IMR-90 (cell line): ENCODE measurements at regions of chr12 and their contacts with region 1.

Region 1: DNA sequence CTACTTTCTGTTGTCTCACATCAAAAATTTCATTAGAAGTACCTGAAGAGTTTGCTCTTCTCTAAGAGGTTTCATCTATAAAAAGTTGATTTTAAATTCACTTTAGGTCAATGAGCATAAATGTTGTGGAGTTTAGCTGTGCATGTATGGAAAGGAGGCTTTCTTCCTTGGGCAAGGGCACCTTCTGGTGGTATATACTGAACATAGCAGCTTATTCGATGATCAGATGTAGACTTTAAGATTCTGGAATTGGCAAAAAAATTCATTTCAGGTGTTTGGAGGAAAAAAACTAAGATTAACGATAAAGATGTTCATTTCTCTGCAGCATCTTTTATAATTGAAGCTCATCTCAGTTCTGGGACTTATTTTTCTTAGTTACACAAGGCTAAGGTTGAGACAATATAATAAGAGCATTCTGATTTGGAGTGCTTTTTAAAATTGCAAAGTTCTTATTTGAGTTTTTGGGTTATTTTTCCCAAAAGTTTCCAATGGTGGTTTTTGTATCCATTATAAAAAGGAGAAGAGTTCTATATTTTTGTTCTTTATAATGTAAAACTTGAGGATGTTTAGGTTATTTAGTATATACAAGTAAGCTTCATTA is 46.8 kb downstream of the TMEM117 start:
- DNase-seq: peak; percentile 76
- ATAC-seq: peak; percentile 97
- H3K4me3 ChIP-seq: no peak overlapping the region
- H3K27ac ChIP-seq: no peak overlapping the region
- H3K4me1 ChIP-seq: no peaks in the 10 kb centered on the region
- H3K27me3 ChIP-seq: no peaks in the 10 kb centered on the region
- CTCF ChIP-seq: peak; percentile 98
- POLR2A ChIP-seq: peak; percentile 33; the same call in 1 of the 2 replicates
- RAD21 ChIP-seq: peak; percentile 99

Region 2: DNA sequence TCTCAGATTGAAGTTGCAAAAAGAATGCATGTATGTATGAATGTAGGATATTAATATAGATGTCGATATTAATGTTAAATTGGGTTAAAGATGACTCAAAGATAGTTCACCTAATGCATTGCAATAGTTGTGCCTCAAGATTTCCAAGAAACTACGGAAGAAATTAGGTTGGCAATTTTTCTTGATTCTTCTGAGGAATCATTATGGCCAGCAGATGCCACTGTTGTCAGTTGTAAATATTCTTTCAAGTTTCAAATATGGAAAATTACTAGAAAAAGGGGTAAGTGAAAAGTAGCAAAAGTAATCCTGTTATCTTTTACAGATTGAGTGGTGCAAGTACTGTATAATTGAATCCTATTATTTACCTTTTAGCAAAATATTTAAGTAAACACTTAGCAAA is 532.8 kb before region 1 on chr12:
- CTCF ChIA-PET with region 1: interaction called, 4 read pairs
- POLR2A ChIA-PET with region 1: no interaction called
- dilution Hi-C with region 1: no loop called
- in situ Hi-C with region 1: loop called (anchors 25 kb)
- intact Hi-C with region 1: loop called (anchors 2 kb)
- DNase-seq: peak; percentile 31
- ATAC-seq: peak; percentile 27; the same call in 1 of the 2 replicates
- H3K4me3 ChIP-seq: no peak overlapping the region
- H3K27ac ChIP-seq: no peak overlapping the region
- H3K4me1 ChIP-seq: no peaks in the 10 kb centered on the region
- H3K27me3 ChIP-seq: no peaks in the 10 kb centered on the region
- CTCF ChIP-seq: peak; percentile 49
- POLR2A ChIP-seq: no peak
- RAD21 ChIP-seq: peak; percentile 39; the same call in 1 of the 2 replicates

Region 3: DNA sequence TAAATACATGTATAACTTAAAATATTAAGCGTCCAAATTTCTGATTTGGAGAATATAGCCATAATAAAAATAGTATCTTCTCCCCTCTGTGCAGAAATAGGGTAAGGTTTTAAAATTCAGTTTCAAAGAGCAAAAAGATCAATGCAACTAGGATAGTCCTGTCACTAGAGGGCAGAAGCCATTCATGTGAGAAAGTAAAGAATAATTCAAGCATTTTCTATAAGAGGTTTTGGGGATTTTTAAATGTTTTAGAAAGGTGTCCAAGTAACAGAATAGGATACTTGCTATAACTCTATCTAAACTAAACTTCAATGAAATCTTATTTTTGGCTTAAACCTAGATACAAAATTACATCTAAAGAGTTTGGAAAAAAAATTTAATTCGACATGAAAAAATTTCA is 381.0 kb before region 1 on chr12:
- CTCF ChIA-PET with region 1: no interaction called
- POLR2A ChIA-PET with region 1: no interaction called
- dilution Hi-C with region 1: no loop called
- in situ Hi-C with region 1: loop called (anchors 10 kb)
- intact Hi-C with region 1: loop called (anchors 1 kb)
- DNase-seq: peak; percentile 34
- ATAC-seq: peak; percentile 51; the same call in 1 of the 2 replicates
- H3K4me3 ChIP-seq: no peak overlapping the region
- H3K27ac ChIP-seq: no peak overlapping the region
- H3K4me1 ChIP-seq: no peaks in the 10 kb centered on the region
- H3K27me3 ChIP-seq: no peaks in the 10 kb centered on the region
- CTCF ChIP-seq: peak; percentile 60
- POLR2A ChIP-seq: no peak
- RAD21 ChIP-seq: peak; percentile 65

Region 4: DNA sequence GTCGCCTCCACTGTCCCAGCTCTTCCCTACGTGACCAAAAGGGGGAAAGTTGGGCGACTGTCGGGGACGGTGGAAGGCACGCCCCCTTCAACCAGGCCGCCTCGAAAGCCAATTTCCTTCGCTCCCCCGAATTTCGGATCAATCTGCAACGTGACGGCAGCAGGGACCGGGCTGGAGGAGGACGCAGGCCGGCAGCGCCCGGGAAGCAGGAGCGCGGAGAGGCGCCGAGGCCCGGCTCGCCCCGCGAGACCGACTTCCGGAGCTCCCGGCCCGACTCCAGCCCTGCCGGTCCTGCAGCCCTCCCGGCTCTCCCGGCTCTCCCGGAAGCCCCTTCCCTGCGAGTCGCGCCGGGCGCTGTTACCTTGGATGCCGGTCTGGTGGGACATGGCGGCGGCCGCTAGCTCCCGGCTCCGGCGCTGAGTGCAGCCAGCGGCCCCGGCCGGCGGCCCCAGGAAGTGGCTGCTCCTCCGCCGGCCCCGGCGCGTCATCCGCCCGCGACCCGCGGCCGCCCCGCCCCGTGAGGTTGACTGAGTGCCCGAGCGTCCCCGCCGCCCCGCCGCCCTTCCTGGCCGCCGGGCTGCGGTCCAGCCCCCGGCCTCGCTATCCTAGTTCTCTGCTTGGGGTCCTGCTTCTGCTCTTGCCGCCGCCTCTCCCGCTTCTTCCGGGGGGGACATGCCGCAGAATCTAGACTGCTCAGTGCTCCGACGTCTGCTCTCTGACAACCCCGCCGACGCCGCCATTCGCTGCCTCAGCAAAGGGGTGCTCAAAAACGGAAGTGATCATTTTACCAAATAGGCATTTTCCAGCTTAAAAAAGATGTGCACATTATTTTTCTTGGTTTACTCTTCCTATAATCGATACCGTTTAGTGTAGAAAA is 76.6 kb before region 1 on chr12 and contains the start of gene TWF1:
- CTCF ChIA-PET with region 1: interaction called, 7 read pairs
- POLR2A ChIA-PET with region 1: no interaction called
- dilution Hi-C with region 1: no loop called
- in situ Hi-C with region 1: loop called (anchors 5 kb)
- intact Hi-C with region 1: loop called (anchors 2 kb)
- DNase-seq: peak; percentile 70
- ATAC-seq: peak; percentile 98
- H3K4me3 ChIP-seq: peak within 1 kb of the TSS; percentile 89
- H3K27ac ChIP-seq: peak within 1 kb of the TSS; percentile 91
- H3K4me1 ChIP-seq: no peaks in the 10 kb centered on the region
- H3K27me3 ChIP-seq: no peaks in the 10 kb centered on the region; the same call in 1 of the 2 replicates
- CTCF ChIP-seq: peak; percentile 30
- POLR2A ChIP-seq: peak; percentile 73
- RAD21 ChIP-seq: no peak
- total RNA-seq, gene TWF1: 141 and 248 TPM in 2 replicates

Region 5: GRCh38 chr12:43816168-43816567 is 66.5 kb before region 1 on chr12:
- CTCF ChIA-PET with region 1: no interaction called
- POLR2A ChIA-PET with region 1: no interaction called
- dilution Hi-C with region 1: no loop called
- in situ Hi-C with region 1: no loop called
- intact Hi-C with region 1: no loop called
- DNase-seq: peak; percentile 20
- ATAC-seq: no peak
- H3K4me3 ChIP-seq: no peak overlapping the region
- H3K27ac ChIP-seq: no peak overlapping the region
- H3K4me1 ChIP-seq: no peaks in the 10 kb centered on the region
- H3K27me3 ChIP-seq: no peaks in the 10 kb centered on the region; the same call in none of the 2 replicates
- CTCF ChIP-seq: no peak
- POLR2A ChIP-seq: no peak
- RAD21 ChIP-seq: no peak

Region 6: GRCh38 chr12:44046732-44047417 is 164.2 kb after region 1 on chr12:
- CTCF ChIA-PET with region 1: no interaction called
- POLR2A ChIA-PET with region 1: no interaction called
- dilution Hi-C with region 1: no loop called
- in situ Hi-C with region 1: no loop called
- intact Hi-C with region 1: no loop called
- DNase-seq: no peak
- ATAC-seq: no peak
- H3K4me3 ChIP-seq: no peak overlapping the region
- H3K27ac ChIP-seq: no peak overlapping the region
- H3K4me1 ChIP-seq: no peaks in the 10 kb centered on the region
- H3K27me3 ChIP-seq: no peaks in the 10 kb centered on the region
- CTCF ChIP-seq: no peak
- POLR2A ChIP-seq: no peak
- RAD21 ChIP-seq: no peak

Region 7: GRCh38 chr12:44930972-44931600 is 1048.4 kb after region 1 on chr12:
- CTCF ChIA-PET with region 1: no interaction called
- POLR2A ChIA-PET with region 1: no interaction called
- dilution Hi-C with region 1: no loop called
- in situ Hi-C with region 1: no loop called
- intact Hi-C with region 1: loop called (anchors 2 kb)
- DNase-seq: peak; percentile 73
- ATAC-seq: peak; percentile 85
- H3K4me3 ChIP-seq: no peak overlapping the region
- H3K27ac ChIP-seq: no peak overlapping the region
- H3K4me1 ChIP-seq: no peaks in the 10 kb centered on the region
- H3K27me3 ChIP-seq: no peaks in the 10 kb centered on the region
- CTCF ChIP-seq: peak; percentile 66
- POLR2A ChIP-seq: no peak
- RAD21 ChIP-seq: peak; percentile 68